HCT116 (cell line): ENCODE measurements at regions of chr16 and their contacts with region 1.

Region 1: DNA sequence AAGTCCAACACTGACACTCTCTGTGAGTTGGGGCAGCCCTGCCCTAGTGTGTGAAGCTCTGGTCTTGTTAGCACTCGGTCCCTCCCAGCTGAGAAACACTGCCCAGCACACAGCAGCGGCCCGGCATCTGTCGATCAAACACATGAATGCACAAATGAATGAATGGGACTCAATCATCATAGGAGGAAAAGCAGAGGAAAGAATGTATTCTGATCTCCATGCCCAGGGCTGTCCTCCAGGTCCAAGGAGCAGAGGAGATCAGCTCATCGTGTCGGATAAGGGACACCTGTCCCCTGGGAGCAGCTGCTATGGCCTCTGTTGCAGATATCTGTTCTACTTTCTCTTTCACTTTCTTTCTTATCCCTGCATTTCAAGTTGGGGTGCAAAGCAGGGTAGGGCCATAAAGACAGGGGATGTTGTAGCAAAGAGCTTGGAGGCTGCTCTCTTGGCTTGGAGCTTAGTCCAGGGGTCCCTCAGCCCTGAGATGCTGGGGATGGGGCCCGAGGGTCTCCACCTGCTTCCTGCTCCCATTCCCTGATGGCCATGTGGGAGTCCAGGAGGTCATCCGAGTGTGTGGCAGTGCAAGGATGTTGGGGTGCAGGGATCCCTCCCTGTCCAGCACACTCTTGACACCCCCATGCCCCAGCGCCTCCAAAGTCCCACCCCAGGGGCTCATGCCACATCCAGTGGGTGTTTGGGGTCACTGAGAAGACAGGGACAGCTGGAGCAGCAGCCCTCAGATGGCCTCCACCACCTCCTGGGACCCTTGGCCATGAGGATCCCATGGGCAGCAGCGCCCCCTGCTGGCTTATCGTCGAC is 88.2 kb downstream of the IRF8 start:
- DNase-seq: no peak
- ATAC-seq: peak; percentile 88
- H3K4me3 ChIP-seq: no peak overlapping the region
- H3K27ac ChIP-seq: no peak overlapping the region
- H3K4me1 ChIP-seq: no peaks in the 10 kb centered on the region
- H3K27me3 ChIP-seq: peaks cover 77% of the 10 kb centered on the region
- CTCF ChIP-seq: peak; percentile 39 to 85 (median 57); a peak in 5 of 6 replicates
- POLR2A ChIP-seq: no peak
- RAD21 ChIP-seq: peak; percentile 71

Region 2: DNA sequence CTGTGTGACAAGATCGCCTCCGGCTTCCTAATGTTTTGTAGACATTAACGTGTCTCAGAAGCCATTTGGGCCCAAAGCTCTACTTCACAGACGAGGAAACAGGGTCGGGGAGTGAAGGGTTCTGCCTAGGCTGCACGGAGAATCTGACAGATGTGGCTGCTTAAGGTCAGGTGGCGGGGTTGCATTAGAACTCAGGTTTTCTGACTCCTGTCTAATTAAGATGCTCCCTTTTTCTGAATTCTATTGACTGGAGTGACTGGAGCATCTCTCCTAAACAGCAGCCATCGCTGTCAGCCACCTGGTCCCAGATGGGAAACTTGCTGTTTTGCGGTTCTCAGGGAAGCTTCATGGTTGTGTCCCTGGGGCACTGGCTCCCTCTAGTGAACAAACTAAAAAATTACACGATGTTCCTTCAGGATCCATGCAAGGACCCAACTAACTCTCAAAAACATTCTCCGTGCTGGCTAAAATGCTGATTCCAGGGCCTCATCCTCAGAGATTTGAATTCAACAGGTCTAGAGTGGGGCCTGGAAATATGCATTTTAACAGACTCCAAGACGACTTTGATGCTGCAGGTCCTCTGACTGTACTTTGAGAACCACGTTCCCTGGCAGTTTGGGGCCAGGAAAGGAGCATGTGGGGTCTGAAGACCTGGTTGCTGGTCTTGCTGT is 29.2 kb after region 1 on chr16:
- CTCF ChIA-PET with region 1: interaction called, 5 read pairs
- POLR2A ChIA-PET with region 1: no interaction called
- RAD21 ChIA-PET with region 1: no interaction called
- intact Hi-C with region 1: loop called (anchors 1 kb)
- DNase-seq: peak; percentile 61
- ATAC-seq: peak; percentile 90
- H3K4me3 ChIP-seq: no peak overlapping the region
- H3K27ac ChIP-seq: no peak overlapping the region
- H3K4me1 ChIP-seq: no peaks in the 10 kb centered on the region
- H3K27me3 ChIP-seq: no peaks in the 10 kb centered on the region
- CTCF ChIP-seq: peak; percentile 81 to 94 (median 90)
- POLR2A ChIP-seq: no peak
- RAD21 ChIP-seq: peak; percentile 94